AG04450 (cell line): ENCODE measurements at regions of chr18 and their contacts with region 1.

Region 1: DNA sequence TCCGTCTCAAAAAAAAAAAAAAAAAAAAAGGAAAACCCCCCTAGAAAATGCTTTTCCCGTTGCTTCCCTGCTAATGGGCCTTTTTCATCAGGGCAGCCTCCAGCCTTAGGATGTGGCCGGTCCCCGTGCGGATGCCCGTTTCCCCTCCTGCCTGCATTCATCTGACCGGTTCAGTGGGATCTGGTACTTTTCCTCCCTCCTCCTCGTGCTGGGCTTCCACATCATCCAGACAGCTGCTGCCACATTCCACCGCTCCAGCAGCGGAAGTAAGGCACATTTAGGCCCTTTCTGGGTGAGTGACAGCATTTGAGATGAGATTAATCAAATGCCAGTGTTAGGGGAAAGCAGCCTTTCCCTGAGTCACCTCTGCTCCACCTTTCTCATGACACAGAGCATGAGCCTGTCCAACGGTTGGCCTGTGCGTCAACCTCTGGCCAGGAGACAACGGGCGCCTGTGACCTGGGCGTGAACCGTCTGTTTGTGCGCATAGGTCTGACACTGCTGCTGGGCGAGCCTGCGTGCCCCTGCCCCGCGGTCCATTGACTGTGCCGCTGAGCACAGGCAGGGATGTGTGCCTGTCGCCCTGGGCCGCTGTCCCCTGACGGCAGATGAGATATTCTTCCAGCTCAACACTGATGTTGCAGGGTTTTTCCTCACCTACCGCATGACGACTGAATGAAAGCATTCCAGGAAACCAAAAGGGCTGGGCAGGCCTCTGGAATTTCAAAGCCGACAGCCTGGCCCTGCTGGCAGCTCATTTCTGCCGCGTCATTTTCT is 174.0 kb downstream of the TGIF1 start:
- DNase-seq: peak; percentile 91
- H3K4me3 ChIP-seq: peak overlapping the region; percentile 51
- H3K27ac ChIP-seq: peak overlapping the region; percentile 100
- H3K27me3 ChIP-seq: no peaks in the 10 kb centered on the region
- CTCF ChIP-seq: no peak

Region 2: GRCh38 chr18:3593904-3594661 is 29.9 kb before region 1 on chr18:
- CTCF ChIA-PET with region 1: interaction called, 13 read pairs
- POLR2A ChIA-PET with region 1: interaction called, 16 read pairs
- DNase-seq: peak; percentile 96
- H3K4me3 ChIP-seq: peak overlapping the region; percentile 76
- H3K27ac ChIP-seq: peak overlapping the region; percentile 100
- H3K27me3 ChIP-seq: no peaks in the 10 kb centered on the region
- CTCF ChIP-seq: peak; percentile 89

Region 3: DNA sequence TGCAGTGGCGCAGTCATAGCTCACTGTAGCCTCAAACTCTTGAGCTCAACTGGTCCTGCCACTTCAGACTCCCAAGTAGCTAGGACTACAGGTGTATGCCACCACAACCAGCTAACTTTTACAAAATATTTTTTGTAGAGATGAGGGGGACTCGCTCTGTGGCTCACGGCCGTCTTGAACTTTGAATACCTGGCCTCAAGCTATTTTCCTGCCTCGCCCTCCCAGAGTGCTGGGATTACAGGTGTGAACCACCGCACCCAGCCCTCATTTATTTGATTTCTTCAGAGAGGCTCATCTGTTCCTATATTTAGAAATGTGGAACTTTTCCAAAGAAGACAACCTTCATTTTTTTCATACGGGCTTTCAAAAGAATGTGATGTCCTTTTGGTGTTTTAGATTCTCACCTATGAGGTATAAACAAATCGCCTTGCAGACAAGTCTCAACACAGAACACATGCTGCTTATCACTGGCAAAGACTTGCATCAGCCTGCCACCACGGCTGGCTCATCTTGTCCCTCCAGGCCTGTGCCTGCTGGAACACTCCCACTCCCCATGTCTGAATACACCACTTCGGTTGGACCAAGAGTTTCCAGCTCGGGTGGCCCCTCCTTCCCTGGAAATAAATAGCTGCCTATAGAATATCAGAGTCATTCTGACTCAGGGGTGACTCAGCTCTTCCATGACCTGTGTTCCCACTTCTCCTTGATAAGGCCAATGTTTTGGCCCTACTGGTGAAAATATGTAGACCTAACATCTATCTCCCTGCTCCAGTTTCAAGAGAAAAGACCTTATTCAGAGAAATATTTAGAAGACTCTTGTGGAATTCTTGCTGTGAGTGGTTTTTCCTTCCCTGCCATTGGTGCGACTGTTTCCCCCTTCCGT is 28.7 kb after region 1 on chr18:
- CTCF ChIA-PET with region 1: no interaction called
- POLR2A ChIA-PET with region 1: interaction called, 17 read pairs
- DNase-seq: peak; percentile 92
- H3K4me3 ChIP-seq: no peak overlapping the region
- H3K27ac ChIP-seq: peak overlapping the region; percentile 96
- H3K27me3 ChIP-seq: no peaks in the 10 kb centered on the region
- CTCF ChIP-seq: peak; percentile 33; the same call in 1 of the 2 replicates